HCT116 (cell line): ENCODE measurements at regions of chr11 and their contacts with region 1.

Region 1: DNA sequence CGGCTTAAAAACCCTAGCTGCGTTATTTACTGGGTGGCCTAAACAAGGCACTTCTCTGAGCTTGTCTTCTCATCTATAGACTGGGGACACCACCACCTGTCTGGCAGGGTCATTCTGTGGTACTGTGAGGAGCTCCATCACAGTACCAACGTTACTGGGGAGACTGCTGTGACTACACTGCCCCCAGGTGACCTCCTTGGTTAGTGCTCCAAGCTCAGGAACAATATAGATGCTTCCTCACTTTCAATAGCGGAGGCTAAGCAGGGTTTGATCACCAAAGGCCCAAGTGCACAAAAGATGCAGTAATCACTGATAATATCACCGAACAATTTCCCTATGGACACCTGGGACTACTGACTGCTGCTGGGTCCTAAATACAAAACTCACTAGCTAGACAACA is 18.8 kb downstream of the PRPF19 start:
- DNase-seq: peak; percentile 31
- ATAC-seq: peak; percentile 95
- H3K4me3 ChIP-seq: no peak overlapping the region
- H3K27ac ChIP-seq: no peak overlapping the region
- H3K4me1 ChIP-seq: no peaks in the 10 kb centered on the region
- H3K27me3 ChIP-seq: no peaks in the 10 kb centered on the region
- CTCF ChIP-seq: peak; percentile 61; a peak in 5 of 6 replicates
- POLR2A ChIP-seq: no peak
- RAD21 ChIP-seq: peak; percentile 78

Region 2: DNA sequence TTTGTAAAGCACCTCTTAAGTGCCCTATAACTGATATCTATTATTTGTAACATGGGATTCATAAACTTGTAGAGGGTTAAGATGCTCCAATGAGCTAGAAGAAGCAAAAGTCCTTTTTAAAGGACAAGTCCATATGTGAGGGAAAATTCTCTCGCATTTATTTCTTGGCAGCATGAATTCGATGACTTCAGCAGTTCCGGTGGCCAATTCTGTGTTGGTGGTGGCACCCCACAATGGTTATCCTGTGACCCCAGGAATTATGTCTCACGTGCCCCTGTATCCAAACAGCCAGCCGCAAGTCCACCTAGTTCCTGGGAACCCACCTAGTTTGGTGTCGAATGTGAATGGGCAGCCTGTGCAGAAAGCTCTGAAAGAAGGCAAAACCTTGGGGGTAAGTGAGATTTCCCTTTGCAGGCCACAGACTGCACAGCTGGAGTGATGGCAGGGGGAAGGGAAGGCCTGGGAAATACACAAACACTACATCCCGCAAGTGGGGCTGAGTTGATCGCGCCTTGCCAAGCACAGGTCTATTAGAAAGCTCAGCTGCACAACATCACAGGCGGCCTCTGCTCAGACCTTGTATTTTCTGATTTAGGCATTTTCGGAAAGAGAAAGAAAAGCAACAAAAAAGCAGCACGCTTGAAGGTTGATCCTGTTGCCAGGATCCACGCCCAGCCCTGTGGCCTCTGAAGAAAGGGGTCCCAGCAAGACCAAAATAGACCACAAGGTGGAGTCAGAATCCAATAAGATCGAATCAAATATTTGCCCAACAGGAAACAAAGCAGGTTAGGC is 186.7 kb before region 1 on chr11:
- CTCF ChIA-PET with region 1: interaction called, 3 read pairs
- POLR2A ChIA-PET with region 1: no interaction called
- RAD21 ChIA-PET with region 1: no interaction called
- intact Hi-C with region 1: loop called (anchors 5 kb)
- DNase-seq: peak; percentile 35
- ATAC-seq: peak; percentile 92
- H3K4me3 ChIP-seq: no peak overlapping the region
- H3K27ac ChIP-seq: no peak overlapping the region
- H3K4me1 ChIP-seq: peaks cover 0 to 3% of the 10 kb centered on the region in 2 experiments; a peak in 2 of 4 replicates
- H3K27me3 ChIP-seq: no peaks in the 10 kb centered on the region
- CTCF ChIP-seq: peak; percentile 59 to 72 (median 69); a peak in 5 of 6 replicates
- POLR2A ChIP-seq: no peak
- RAD21 ChIP-seq: peak; percentile 66